HepG2 (cell line): ENCODE measurements at regions of chr1 and their contacts with region 1.

Region 1: DNA sequence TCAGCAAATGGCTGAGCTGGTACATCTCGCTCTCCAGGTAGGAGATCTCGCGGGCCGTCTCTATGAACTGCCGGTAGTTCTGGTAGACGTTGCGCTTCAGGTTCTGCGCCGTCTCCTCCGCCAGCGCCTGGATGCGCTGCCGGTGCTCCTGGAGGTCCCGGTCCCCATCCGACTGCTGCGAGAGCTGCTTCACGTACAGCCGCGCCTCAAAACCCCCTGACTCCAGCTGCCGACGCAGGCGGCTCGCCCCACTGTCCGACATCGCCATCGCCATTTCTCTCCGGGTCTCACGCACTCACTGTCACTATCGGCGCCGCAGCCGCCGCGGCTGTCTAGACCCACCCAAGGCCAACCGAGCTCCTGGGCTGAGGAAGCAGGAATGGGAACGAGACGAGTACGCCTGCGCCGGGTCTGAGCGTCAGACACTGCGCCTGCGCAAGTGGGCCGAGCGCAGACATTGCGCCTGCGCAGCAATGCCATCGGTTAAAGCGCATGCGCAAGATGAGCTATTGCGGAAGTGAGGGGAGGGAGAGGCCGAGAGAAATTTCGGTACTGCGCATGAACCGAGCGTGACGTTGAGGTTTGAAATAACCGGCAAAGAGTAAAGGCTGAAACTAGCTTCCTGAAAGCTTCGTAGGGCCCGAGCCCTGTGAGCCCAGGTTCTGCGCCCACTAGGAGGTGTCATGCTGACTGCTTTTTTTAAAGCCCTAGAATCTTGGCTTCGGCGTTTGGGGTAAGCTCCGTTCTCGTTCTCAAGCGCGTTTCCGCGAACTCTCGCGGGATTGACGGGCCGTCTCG is at the start of gene EXOC8:
- DNase-seq: peak; percentile 96
- ATAC-seq: peak; percentile 90
- H3K4me3 ChIP-seq: peak within 1 kb of the TSS; percentile 88 to 93 (median 91)
- H3K27ac ChIP-seq: peak within 1 kb of the TSS; percentile 89
- H3K4me1 ChIP-seq: peaks cover 42% of the 10 kb centered on the region
- H3K27me3 ChIP-seq: no peaks in the 10 kb centered on the region; a peak in 1 of 5 replicates
- CTCF ChIP-seq: peak; percentile 45
- EP300 ChIP-seq: 0 out of 4 replicates have a peak, but pooled peaks of 1 of the 2 experiments have one; percentile 20
- POLR2A ChIP-seq: peak; percentile 65 to 76
- RAD21 ChIP-seq: no peak; the same call in 1 of the 2 replicates
- total RNA-seq, gene EXOC8: 7.9 and 12.0 TPM in 2 replicates

Region 2: GRCh38 chr1:231232870-231233734 is 104.6 kb before region 1 on chr1:
- CTCF ChIA-PET with region 1: no interaction called
- POLR2A ChIA-PET with region 1: interaction called, 13 read pairs
- in situ Hi-C with region 1: no loop called
- intact Hi-C with region 1: no loop called
- DNase-seq: peak; percentile 80
- ATAC-seq: peak; percentile 70
- H3K4me3 ChIP-seq: peak overlapping the region in 1 of 3 experiments; percentile 24; a peak in 1 of 6 replicates
- H3K27ac ChIP-seq: peak overlapping the region; percentile 98
- H3K4me1 ChIP-seq: peaks cover 68% of the 10 kb centered on the region
- H3K27me3 ChIP-seq: no peaks in the 10 kb centered on the region
- CTCF ChIP-seq: no peak
- EP300 ChIP-seq: peak in 1 of 2 experiments; percentile 84; a peak in 3 of 4 replicates
- POLR2A ChIP-seq: 0 out of 4 replicates have a peak, but pooled peaks of 1 of the 2 experiments have one; percentile 33
- RAD21 ChIP-seq: no peak

Region 3: GRCh38 chr1:231240883-231241735 is 96.6 kb before region 1 on chr1 and contains the start of gene GNPAT:
- CTCF ChIA-PET with region 1: no interaction called
- POLR2A ChIA-PET with region 1: interaction called, 3 read pairs
- in situ Hi-C with region 1: no loop called
- intact Hi-C with region 1: loop called (anchors 5 kb)
- DNase-seq: peak; percentile 76
- ATAC-seq: peak; percentile 97
- H3K4me3 ChIP-seq: peak within 1 kb of the TSS; percentile 89 to 99 (median 93)
- H3K27ac ChIP-seq: peak within 1 kb of the TSS; percentile 88
- H3K4me1 ChIP-seq: peaks cover 75% of the 10 kb centered on the region
- H3K27me3 ChIP-seq: no peaks in the 10 kb centered on the region; a peak in 1 of 5 replicates
- CTCF ChIP-seq: no peak; the same call in 1 of the 2 replicates
- EP300 ChIP-seq: no peak
- POLR2A ChIP-seq: peak; percentile 89
- RAD21 ChIP-seq: no peak
- total RNA-seq, gene GNPAT: 114 and 153 TPM in 2 replicates

Region 4: DNA sequence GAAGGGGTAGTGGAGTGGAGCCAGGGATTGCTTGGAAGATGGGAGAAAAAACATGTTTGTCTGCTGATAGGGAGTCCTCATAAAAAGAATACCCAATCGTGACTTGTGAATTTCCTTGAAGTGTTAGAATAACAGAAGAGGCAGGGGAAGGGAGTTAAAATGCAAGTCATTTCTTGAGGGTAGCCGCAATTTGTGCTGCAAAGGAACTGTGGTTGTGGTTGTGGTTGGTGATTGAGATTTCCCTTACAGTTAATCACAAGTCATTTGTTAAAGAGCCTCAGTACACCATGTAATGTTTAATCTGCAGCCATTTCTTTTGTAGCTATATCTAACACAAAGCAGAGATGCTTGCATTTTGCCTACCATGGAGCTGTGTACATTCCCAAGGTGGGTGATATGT is 122.9 kb after region 1 on chr1:
- CTCF ChIA-PET with region 1: no interaction called
- POLR2A ChIA-PET with region 1: no interaction called
- in situ Hi-C with region 1: no loop called
- intact Hi-C with region 1: no loop called
- DNase-seq: no peak
- ATAC-seq: no peak
- H3K4me3 ChIP-seq: no peak overlapping the region
- H3K27ac ChIP-seq: no peak overlapping the region
- H3K4me1 ChIP-seq: no peaks in the 10 kb centered on the region
- H3K27me3 ChIP-seq: no peaks in the 10 kb centered on the region; a peak in 1 of 5 replicates
- CTCF ChIP-seq: no peak
- EP300 ChIP-seq: no peak
- POLR2A ChIP-seq: no peak
- RAD21 ChIP-seq: no peak

Region 5: GRCh38 chr1:231528172-231529029 is 190.7 kb after region 1 on chr1 and contains the start of gene TSNAX:
- CTCF ChIA-PET with region 1: no interaction called
- POLR2A ChIA-PET with region 1: interaction called, 11 read pairs
- in situ Hi-C with region 1: no loop called
- intact Hi-C with region 1: loop called (anchors 1 kb)
- DNase-seq: peak; percentile 88
- ATAC-seq: peak; percentile 97
- H3K4me3 ChIP-seq: peak within 1 kb of the TSS; percentile 75 to 86 (median 82)
- H3K27ac ChIP-seq: peak within 1 kb of the TSS; percentile 95
- H3K4me1 ChIP-seq: peaks cover 46% of the 10 kb centered on the region
- H3K27me3 ChIP-seq: no peaks in the 10 kb centered on the region; a peak in 1 of 5 replicates
- CTCF ChIP-seq: no peak
- EP300 ChIP-seq: peak in 1 of 2 experiments; percentile 5; a peak in 1 of 4 replicates
- POLR2A ChIP-seq: peak; percentile 85 to 91
- RAD21 ChIP-seq: no peak
- total RNA-seq, gene TSNAX: 46.2 and 69.1 TPM in 2 replicates